Dorsolateral prefrontal cortex (tissue), 120 donors: ENCODE measurements at regions of chr18 and their contacts with region 1.

Region 1: GRCh38 chr18:61333746-61334490 is 688 bp downstream of the CDH20 start:
- DNase-seq: peak; percentile 25 to 74 (median 42)
- H3K4me3 ChIP-seq: peak overlapping the region; percentile 53 to 94 (median 82)
- H3K27ac ChIP-seq: peak overlapping the region; percentile 63 to 100 (median 98)
- H3K27me3 ChIP-seq: peaks cover 0 to 4% (median 0%) of the 10 kb centered on the region in 45 donors
- CTCF ChIP-seq: peak in 33 of 56 donors; percentile 3 to 62 (median 21)

Region 2: GRCh38 chr18:61413396-61413795 is 79.5 kb after region 1 on chr18:
- intact Hi-C with region 1: loop called (anchors 5 kb)
- DNase-seq: peak in 1 of 10 donors; percentile 26
- H3K4me3 ChIP-seq: peak overlapping the region in 24 of 59 donors; percentile 2 to 58 (median 28)
- H3K27ac ChIP-seq: peak overlapping the region in 58 of 59 donors; percentile 16 to 95 (median 88)
- H3K27me3 ChIP-seq: no peaks in the 10 kb centered on the region
- CTCF ChIP-seq: peak in 1 of 56 donors; percentile 7